ENCODE measurements at regions of chr10 and their contacts with region 1.

Region 1: DNA sequence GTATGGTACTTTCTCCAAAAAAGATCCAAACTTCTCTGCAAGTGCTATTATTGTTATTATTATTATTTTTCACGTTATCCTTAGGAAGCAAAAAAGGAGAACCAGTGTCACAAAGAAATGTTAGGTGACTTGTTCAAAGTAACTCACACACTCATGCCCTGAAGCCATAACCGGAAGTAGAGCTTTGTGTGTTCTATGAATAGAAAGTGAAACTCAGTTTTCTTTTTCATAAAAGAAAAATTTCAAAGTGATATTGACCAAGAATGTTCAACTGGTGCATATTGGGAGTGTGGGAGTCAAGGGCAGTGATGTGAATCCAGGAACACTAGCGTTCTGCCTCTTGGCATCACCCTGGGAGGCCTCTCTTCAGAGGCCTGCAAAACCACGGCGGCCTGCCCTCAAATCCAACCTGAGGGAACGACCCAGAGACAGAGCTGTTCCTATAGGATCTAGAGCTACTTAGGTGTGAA is 106.1 kb downstream of the PRKCQ start:
- DNase-seq: peak in 5 of 9 experiments; percentile 15 to 86 (median 46)
- ATAC-seq: peak; percentile 77
- H3K4me3 ChIP-seq: peak overlapping the region; percentile 42 to 46
- H3K4me3 Mint-ChIP-seq: peak overlapping the region; percentile 90
- H3K27ac ChIP-seq: peak overlapping the region; percentile 63 to 95
- H3K27ac Mint-ChIP-seq: peak overlapping the region; percentile 99
- H3K4me1 ChIP-seq: peaks cover 24% of the 10 kb centered on the region
- H3K4me1 Mint-ChIP-seq: peaks cover 59% of the 10 kb centered on the region
- H3K27me3 ChIP-seq: no peaks in the 10 kb centered on the region
- H3K27me3 Mint-ChIP-seq: no peaks in the 10 kb centered on the region
- CTCF ChIP-seq: no peak

Region 2: DNA sequence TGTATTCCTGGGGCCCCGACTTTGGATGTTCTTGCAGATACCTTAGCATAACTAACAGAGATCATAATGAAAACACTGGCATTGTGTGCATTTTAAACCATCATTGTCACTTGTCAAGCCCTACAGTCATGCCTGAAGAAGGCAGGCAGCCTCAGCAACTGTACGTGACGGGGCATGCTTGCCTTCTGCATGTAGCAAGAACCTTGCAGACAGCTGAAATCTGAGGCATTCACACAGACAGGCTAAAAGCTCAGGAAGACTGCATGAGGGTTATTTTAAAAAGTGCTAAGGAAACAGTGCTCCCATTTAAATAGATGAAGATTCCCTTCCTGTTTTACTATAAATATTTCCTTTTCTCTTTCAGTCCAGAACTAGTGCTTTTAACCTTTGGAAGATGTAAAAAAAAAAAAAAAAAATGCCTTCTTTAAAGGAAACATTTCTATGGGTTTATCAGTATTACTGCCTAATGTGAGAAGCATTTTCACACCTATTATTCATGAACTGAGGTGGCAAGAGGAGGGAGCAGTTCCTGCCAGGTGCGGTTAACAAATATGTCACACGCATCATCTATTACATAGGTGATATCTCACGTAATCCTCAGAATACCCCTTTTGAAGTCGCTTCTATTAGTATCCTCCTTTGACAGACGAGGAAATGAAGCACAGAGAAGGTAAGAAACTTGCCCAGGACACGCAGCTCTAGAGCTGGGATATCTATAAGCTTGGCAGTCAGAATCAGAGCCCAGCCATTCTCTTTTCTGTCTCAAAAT is 18.1 kb after region 1 on chr10:
- CTCF ChIA-PET with region 1: interaction called, 4 read pairs
- POLR2A ChIA-PET with region 1: interaction called, 15 read pairs
- intact Hi-C with region 1: loop called (anchors 1 to 2 kb)
- DNase-seq: peak in 4 of 9 experiments; percentile 37 to 95 (median 80)
- ATAC-seq: peak; percentile 66
- H3K4me3 ChIP-seq: peak overlapping the region in 1 of 2 experiments; percentile 39
- H3K4me3 Mint-ChIP-seq: peak overlapping the region; percentile 72
- H3K27ac ChIP-seq: peak overlapping the region; percentile 46 to 97
- H3K27ac Mint-ChIP-seq: peak overlapping the region; percentile 96
- H3K4me1 ChIP-seq: peaks cover 46% of the 10 kb centered on the region
- H3K4me1 Mint-ChIP-seq: peaks cover 29% of the 10 kb centered on the region
- H3K27me3 ChIP-seq: no peaks in the 10 kb centered on the region
- H3K27me3 Mint-ChIP-seq: no peaks in the 10 kb centered on the region
- CTCF ChIP-seq: no peak

Region 3: GRCh38 chr10:6530211-6530840 is 56.4 kb after region 1 on chr10:
- CTCF ChIA-PET with region 1: no interaction called
- POLR2A ChIA-PET with region 1: interaction called, 10 read pairs
- intact Hi-C with region 1: no loop called
- DNase-seq: peak; percentile 49 to 89 (median 77)
- ATAC-seq: peak; percentile 96
- H3K4me3 ChIP-seq: peak overlapping the region; percentile 38 to 42
- H3K4me3 Mint-ChIP-seq: peak overlapping the region; percentile 83
- H3K27ac ChIP-seq: peak overlapping the region; percentile 84 to 89
- H3K27ac Mint-ChIP-seq: peak overlapping the region; percentile 97
- H3K4me1 ChIP-seq: peaks cover 57% of the 10 kb centered on the region
- H3K4me1 Mint-ChIP-seq: peaks cover 85% of the 10 kb centered on the region
- H3K27me3 ChIP-seq: no peaks in the 10 kb centered on the region
- H3K27me3 Mint-ChIP-seq: no peaks in the 10 kb centered on the region
- CTCF ChIP-seq: no peak

Region 4: GRCh38 chr10:6563075-6563474 is 89.1 kb after region 1 on chr10:
- CTCF ChIA-PET with region 1: interaction called, 3 read pairs
- POLR2A ChIA-PET with region 1: interaction called, 3 read pairs
- intact Hi-C with region 1: loop called in 1 of 2 experiments (anchors 5 kb)
- DNase-seq: peak in 5 of 9 experiments; percentile 6 to 68 (median 44)
- ATAC-seq: peak; percentile 64
- H3K4me3 ChIP-seq: no peak overlapping the region
- H3K4me3 Mint-ChIP-seq: peak overlapping the region; percentile 57
- H3K27ac ChIP-seq: peak overlapping the region; percentile 7 to 63
- H3K27ac Mint-ChIP-seq: peak overlapping the region; percentile 80
- H3K4me1 ChIP-seq: peaks cover 79% of the 10 kb centered on the region
- H3K4me1 Mint-ChIP-seq: peaks cover 91% of the 10 kb centered on the region
- H3K27me3 ChIP-seq: no peaks in the 10 kb centered on the region
- H3K27me3 Mint-ChIP-seq: no peaks in the 10 kb centered on the region
- CTCF ChIP-seq: no peak

Region 5: GRCh38 chr10:6647811-6648526 is 174.0 kb after region 1 on chr10:
- CTCF ChIA-PET with region 1: interaction called, 9 read pairs
- POLR2A ChIA-PET with region 1: interaction called, 3 read pairs
- intact Hi-C with region 1: loop called in 1 of 2 experiments (anchors 1 kb)
- DNase-seq: peak; percentile 43 to 84 (median 74)
- ATAC-seq: peak; percentile 99
- H3K4me3 ChIP-seq: no peak overlapping the region
- H3K4me3 Mint-ChIP-seq: no peak overlapping the region
- H3K27ac ChIP-seq: no peak overlapping the region
- H3K27ac Mint-ChIP-seq: no peak overlapping the region
- H3K4me1 ChIP-seq: peaks cover 15% of the 10 kb centered on the region
- H3K4me1 Mint-ChIP-seq: peaks cover 22% of the 10 kb centered on the region
- H3K27me3 ChIP-seq: no peaks in the 10 kb centered on the region
- H3K27me3 Mint-ChIP-seq: no peaks in the 10 kb centered on the region
- CTCF ChIP-seq: peak; percentile 90

Measured in CD8-positive, alpha-beta T cell (primary cell).